CD4-positive, alpha-beta memory T cell (primary cell): ENCODE measurements at regions of chr5 and their contacts with region 1.

Region 1: GRCh38 chr5:65961633-65962032 is 35.3 kb downstream of the ERBIN start:
- DNase-seq: no peak
- H3K4me3 ChIP-seq: no peak overlapping the region
- H3K4me3 Mint-ChIP-seq: peak overlapping the region in 6 of 8 donors; percentile 5 to 55 (median 12)
- H3K27ac ChIP-seq: no peak overlapping the region
- H3K27ac Mint-ChIP-seq: peak overlapping the region in 4 of 7 donors; percentile 11 to 42 (median 27)
- H3K4me1 ChIP-seq: peaks cover 47% of the 10 kb centered on the region
- H3K4me1 Mint-ChIP-seq: peaks cover 25 to 69% (median 55%) of the 10 kb centered on the region in 4 donors
- H3K27me3 ChIP-seq: no peaks in the 10 kb centered on the region
- H3K27me3 Mint-ChIP-seq: no peaks in the 10 kb centered on the region

Region 2: DNA sequence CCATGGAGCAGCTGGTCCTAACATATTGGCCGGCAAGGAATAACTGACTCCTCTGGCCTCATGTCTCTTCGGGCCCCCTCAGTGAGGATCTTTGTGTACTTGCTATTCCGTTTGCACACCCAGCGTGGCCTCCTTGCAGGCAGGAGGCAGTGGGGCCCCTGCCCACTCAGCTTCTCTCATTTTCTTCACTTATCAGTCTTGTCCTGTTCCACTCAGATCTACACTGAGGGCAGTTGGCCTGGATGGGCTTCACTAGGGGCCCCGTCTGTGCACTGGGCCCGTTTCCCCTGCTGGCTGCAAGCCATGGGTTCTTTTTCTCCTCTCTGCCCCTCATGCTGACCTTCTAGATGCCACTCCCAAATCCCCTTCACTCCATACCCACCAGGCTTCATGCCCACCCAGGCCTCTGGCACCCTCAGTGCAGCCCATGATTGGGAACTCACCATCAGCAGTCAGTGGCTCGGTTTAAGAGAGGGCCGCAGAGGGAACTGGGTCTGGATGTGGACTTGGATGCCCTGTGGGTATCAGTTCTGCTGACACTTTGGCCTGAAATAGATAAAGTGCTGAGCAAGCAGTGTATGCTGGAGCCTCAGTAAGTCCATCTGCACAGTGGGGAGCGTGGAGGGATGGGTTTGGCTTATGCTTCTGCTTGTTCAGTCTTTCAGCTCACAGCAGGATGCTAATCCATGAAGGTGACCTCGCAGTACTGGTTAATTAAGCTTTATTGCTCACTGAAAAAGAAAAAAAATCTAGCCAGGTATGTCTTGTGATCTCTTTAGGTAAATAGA is 22.7 kb after region 1 on chr5:
- CTCF ChIA-PET with region 1: no interaction called
- POLR2A ChIA-PET with region 1: no interaction called
- intact Hi-C with region 1: loop called (anchors 2 kb)
- DNase-seq: no peak
- H3K4me3 ChIP-seq: no peak overlapping the region
- H3K4me3 Mint-ChIP-seq: peak overlapping the region in 2 of 8 donors; percentile 12 to 53
- H3K27ac ChIP-seq: no peak overlapping the region
- H3K27ac Mint-ChIP-seq: peak overlapping the region in 4 of 7 donors; percentile 19 to 70 (median 67)
- H3K4me1 ChIP-seq: peaks cover 75% of the 10 kb centered on the region
- H3K4me1 Mint-ChIP-seq: peaks cover 18 to 82% (median 62%) of the 10 kb centered on the region in 4 donors
- H3K27me3 ChIP-seq: no peaks in the 10 kb centered on the region
- H3K27me3 Mint-ChIP-seq: no peaks in the 10 kb centered on the region

Region 3: DNA sequence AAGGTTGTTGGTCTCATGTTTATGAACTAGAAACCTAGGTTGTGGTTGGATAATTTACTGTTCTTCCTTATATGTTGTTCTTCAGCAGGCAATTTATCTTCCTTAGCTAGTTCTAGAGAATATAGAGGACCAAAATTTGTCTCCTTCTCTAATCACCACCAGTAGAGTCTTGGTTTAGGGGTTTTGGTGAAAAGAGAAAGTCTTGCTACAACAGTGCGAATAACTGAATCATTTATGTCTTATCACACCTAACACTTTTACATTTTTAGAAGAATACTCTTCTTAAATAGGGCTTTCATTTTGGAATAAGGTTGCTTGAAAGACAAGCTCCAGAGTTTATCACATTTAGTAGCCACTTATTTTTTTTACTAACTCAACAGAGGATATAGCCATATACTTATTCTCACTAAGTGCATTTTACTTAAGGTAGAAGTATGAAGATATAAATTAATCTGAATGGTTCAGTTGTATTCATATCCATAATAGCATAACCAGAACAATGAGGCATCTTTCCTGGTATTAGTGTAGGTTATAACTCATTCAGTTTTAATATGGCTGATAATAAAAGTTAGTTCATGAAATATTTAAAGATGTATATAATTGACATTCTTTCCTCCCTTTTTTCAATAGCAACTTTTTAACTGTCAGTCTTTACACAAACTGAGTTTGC is 32.6 kb after region 1 on chr5:
- CTCF ChIA-PET with region 1: no interaction called
- POLR2A ChIA-PET with region 1: no interaction called
- intact Hi-C with region 1: loop called (anchors 2 kb)
- DNase-seq: no peak
- H3K4me3 ChIP-seq: no peak overlapping the region
- H3K4me3 Mint-ChIP-seq: no peak overlapping the region
- H3K27ac ChIP-seq: no peak overlapping the region
- H3K27ac Mint-ChIP-seq: peak overlapping the region in 4 of 7 donors; percentile 13 to 55 (median 22)
- H3K4me1 ChIP-seq: peaks cover under 1% of the 10 kb centered on the region
- H3K4me1 Mint-ChIP-seq: peaks cover 4 to 32% (median 20%) of the 10 kb centered on the region in 4 donors
- H3K27me3 ChIP-seq: no peaks in the 10 kb centered on the region
- H3K27me3 Mint-ChIP-seq: no peaks in the 10 kb centered on the region